BJ (cell line): ENCODE measurements at regions of chr5 and their contacts with region 1.

Region 1: DNA sequence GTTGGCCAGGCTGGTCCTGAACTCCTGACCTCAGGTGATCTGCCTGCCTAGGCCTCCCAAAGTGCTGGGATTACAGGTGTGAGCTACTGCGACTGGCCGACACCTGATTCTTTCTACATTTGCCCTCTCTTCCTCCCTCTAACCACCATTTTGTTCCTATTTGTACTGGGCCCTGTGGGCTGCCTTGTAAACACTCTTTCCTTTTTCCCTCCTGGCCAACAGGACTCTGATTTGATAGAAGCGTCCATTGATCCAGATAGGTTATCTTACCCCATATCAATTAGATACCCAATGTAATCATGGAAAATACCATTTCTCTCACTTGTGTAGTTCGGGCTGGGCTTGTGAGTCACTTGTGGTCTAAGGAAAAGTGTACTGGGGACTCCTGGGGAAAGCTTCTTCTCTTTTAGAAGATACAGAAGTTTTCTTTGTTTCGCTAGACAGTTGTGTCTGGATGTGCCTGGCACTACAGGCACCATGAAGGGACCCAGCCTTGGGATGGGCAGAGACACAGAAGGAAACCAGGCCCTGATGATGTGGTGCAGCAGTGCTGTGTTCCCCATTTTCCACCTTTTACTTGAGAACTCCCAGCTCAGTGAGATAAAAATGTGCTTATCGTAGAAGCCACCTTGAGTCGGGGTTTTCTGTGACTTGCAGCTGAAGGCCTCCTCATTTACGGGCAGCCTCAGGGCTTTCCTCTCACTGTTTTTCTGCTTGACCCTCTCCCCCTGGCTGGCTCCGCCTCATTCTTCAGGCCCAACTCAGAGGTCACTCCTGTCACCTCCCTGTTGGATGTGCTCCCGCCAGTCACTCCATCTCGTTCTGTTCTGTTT is 32.8 kb upstream of the CPEB4 start:
- DNase-seq: no peak
- H3K4me3 ChIP-seq: no peak overlapping the region
- H3K27me3 ChIP-seq: peaks cover 5% of the 10 kb centered on the region
- CTCF ChIP-seq: no peak

Region 2: DNA sequence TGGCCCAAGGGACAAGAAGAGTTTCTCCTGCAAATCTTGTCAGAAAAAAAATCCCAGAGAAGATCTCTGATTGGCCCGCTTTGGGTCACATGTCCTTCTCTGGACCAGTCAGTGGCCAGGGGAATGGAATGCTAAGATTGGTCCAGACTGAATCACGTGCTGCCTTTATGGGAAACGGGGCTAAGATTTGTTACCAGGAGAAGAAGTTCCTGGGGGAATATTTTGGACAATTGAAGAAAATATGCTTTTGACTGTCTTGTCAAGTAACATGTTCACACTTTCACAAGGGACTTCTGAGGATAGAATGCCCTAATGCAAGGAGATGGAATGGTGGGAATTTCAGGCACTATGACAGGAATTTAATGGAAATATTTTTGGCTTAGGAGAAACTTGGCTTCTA is 1326.9 kb before region 1 on chr5:
- CTCF ChIA-PET with region 1: no interaction called
- POLR2A ChIA-PET with region 1: interaction called, 12 read pairs
- DNase-seq: peak; percentile 53
- H3K4me3 ChIP-seq: no peak overlapping the region
- H3K27me3 ChIP-seq: peaks cover 26% of the 10 kb centered on the region
- CTCF ChIP-seq: no peak

Region 3: GRCh38 chr5:173602423-173602822 is 253.0 kb before region 1 on chr5:
- CTCF ChIA-PET with region 1: no interaction called
- POLR2A ChIA-PET with region 1: no interaction called
- DNase-seq: no peak
- H3K4me3 ChIP-seq: no peak overlapping the region
- H3K27me3 ChIP-seq: no peaks in the 10 kb centered on the region
- CTCF ChIP-seq: 0 out of 2 replicates have a peak, but pooled peaks have one; percentile 7